Activated CD8-positive, alpha-beta T cell treated with anti-CD3 and anti-CD28 coated beads for 36 hours (primary cell): ENCODE measurements at regions of chr7 and their contacts with region 1.

Region 1: GRCh38 chr7:77759294-77759889 is 38.8 kb downstream of the TMEM60 start:
- DNase-seq: peak; percentile 83
- ATAC-seq: peak; percentile 76
- H3K4me3 Mint-ChIP-seq: no peak overlapping the region
- H3K27ac Mint-ChIP-seq: no peak overlapping the region
- H3K4me1 Mint-ChIP-seq: peaks cover 36% of the 10 kb centered on the region
- H3K27me3 Mint-ChIP-seq: no peaks in the 10 kb centered on the region
- CTCF ChIP-seq: peak; percentile 96

Region 2: DNA sequence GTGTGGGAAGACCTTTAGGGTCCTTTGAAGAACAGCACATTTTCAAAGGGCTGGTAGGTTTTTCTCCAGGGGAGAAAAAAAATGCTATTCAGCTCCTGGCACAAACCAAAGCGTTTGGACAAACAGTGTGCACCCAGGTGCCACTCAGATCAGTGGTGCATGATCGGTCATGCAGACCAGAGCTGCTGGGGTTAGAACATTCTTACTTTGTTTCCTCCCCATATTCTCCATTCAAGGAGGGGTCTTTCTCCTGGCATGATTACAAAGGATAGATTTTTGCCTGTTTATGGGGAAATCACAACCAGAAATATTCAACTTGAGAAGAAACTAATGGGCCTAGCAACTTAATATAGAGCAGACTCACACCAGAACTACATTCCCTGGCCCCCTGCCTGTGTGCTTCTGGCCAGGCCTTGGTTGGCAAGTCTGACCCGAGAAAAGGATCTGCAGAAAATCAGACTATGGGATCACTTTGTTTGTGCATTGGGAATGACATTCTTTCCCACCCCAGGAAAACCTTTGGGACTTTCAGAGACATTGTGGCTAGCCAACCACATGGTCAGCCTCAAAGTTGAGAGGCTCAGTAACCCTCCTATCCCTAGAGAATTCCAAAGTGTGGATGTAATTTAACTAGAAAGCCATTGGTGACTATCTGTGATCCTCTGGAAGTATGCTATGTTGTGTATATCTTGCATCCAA is 477.5 kb before region 1 on chr7:
- CTCF ChIA-PET with region 1: no interaction called
- POLR2A ChIA-PET with region 1: no interaction called
- intact Hi-C with region 1: no loop called
- DNase-seq: no peak
- ATAC-seq: no peak
- H3K4me3 Mint-ChIP-seq: no peak overlapping the region
- H3K27ac Mint-ChIP-seq: no peak overlapping the region
- H3K4me1 Mint-ChIP-seq: no peaks in the 10 kb centered on the region
- H3K27me3 Mint-ChIP-seq: no peaks in the 10 kb centered on the region
- CTCF ChIP-seq: no peak

Region 3: GRCh38 chr7:77674878-77675277 is 84.5 kb before region 1 on chr7:
- CTCF ChIA-PET with region 1: interaction called, 13 read pairs
- POLR2A ChIA-PET with region 1: no interaction called
- intact Hi-C with region 1: no loop called
- DNase-seq: peak; percentile 31
- ATAC-seq: peak; percentile 62
- H3K4me3 Mint-ChIP-seq: no peak overlapping the region
- H3K27ac Mint-ChIP-seq: no peak overlapping the region
- H3K4me1 Mint-ChIP-seq: peaks cover 1% of the 10 kb centered on the region
- H3K27me3 Mint-ChIP-seq: no peaks in the 10 kb centered on the region
- CTCF ChIP-seq: no peak

Region 4: DNA sequence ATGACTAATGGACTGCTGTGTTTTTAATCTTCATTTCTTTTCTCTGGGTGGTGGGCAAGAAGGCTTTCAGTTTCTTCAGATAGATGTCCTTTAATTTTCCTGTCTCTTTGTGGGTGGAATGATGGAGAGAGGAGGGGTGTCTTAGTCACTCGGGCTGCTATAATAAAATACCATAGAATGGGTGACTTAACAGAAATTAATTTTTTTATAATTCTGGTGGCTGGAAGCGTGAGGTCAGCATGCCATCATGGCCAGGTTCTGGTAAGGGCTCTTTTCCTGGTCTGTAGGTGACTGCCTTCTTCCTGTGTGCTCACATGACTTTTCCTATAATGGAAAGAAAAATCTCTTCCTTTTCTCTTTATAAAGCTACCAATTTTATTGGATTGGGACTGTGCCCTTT is 56.9 kb before region 1 on chr7:
- CTCF ChIA-PET with region 1: interaction called, 8 read pairs
- POLR2A ChIA-PET with region 1: interaction called, 3 read pairs
- intact Hi-C with region 1: loop called (anchors 5 kb)
- DNase-seq: no peak
- ATAC-seq: no peak
- H3K4me3 Mint-ChIP-seq: no peak overlapping the region
- H3K27ac Mint-ChIP-seq: peak overlapping the region; percentile 51
- H3K4me1 Mint-ChIP-seq: peaks cover 53% of the 10 kb centered on the region
- H3K27me3 Mint-ChIP-seq: no peaks in the 10 kb centered on the region
- CTCF ChIP-seq: no peak

Region 5: GRCh38 chr7:77823787-77824186 is 64.4 kb after region 1 on chr7:
- CTCF ChIA-PET with region 1: no interaction called
- POLR2A ChIA-PET with region 1: no interaction called
- intact Hi-C with region 1: no loop called
- DNase-seq: no peak
- ATAC-seq: no peak
- H3K4me3 Mint-ChIP-seq: no peak overlapping the region
- H3K27ac Mint-ChIP-seq: no peak overlapping the region
- H3K4me1 Mint-ChIP-seq: peaks cover 34% of the 10 kb centered on the region
- H3K27me3 Mint-ChIP-seq: no peaks in the 10 kb centered on the region
- CTCF ChIP-seq: no peak

Region 6: GRCh38 chr7:78020136-78020873 is 260.9 kb after region 1 on chr7:
- CTCF ChIA-PET with region 1: no interaction called
- POLR2A ChIA-PET with region 1: no interaction called
- intact Hi-C with region 1: no loop called
- DNase-seq: peak; percentile 37
- ATAC-seq: peak; percentile 50
- H3K4me3 Mint-ChIP-seq: peak overlapping the region; percentile 63
- H3K27ac Mint-ChIP-seq: no peak overlapping the region
- H3K4me1 Mint-ChIP-seq: peaks cover 5% of the 10 kb centered on the region
- H3K27me3 Mint-ChIP-seq: peaks cover 27% of the 10 kb centered on the region
- CTCF ChIP-seq: peak; percentile 74